ENCODE measurements at regions of chr11 and their contacts with region 1.

Region 1: DNA sequence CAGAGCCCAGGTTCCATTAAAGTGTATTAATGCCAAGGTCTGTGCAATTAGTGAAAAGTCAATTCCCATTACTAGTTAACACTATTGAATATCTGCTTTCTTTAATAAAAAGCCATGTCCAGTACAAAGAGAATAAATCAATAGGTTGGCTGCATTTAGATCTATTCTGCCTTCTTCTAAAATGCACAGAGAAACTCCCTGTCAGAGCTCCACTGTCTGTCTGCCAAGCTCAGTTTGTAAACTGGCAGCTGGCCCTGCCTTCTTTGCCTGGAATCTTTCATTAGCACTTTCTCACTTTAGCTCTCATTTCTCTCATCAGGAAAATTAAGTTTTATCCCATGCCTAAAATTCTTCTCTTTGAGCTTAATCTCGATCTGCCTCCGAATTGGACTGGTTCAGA is 35.6 kb downstream of the ARL14EP start:
- DNase-seq: no peak
- CTCF ChIP-seq: no peak

Region 2: GRCh38 chr11:30617771-30618170 is 259.2 kb after region 1 on chr11:
- in situ Hi-C with region 1: no loop called
- DNase-seq: no peak
- CTCF ChIP-seq: no peak

Region 3: DNA sequence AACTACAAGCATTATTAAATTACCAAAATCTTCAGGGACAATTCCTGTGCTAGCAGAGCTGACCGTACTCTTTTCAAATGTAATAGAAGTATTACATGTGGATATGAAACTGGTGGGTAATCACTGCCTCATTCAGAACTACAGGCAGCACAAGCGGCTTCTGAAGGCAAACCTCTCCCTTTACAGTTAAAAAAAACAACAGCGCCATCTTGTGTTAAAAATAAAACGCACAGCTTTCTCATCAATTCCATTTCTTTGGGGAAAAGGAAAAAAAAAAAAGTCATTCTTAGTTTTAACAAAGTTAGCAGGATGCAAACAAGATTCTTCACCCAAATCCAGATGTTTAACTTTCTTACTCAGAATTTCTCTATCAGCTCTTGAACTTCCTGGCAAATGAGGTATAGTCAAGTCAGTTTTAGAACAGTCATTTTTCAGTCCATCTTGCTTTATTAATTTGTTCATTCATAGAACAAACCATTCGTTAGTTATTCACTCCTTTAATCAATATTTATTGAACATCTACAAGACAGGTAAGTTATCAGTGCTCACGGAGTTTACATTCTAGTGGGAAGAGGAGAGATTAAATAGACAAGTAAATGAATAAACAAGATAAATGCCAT is 559.4 kb after region 1 on chr11:
- in situ Hi-C with region 1: loop called (anchors 10 kb)
- DNase-seq: peak; percentile 36
- CTCF ChIP-seq: peak; percentile 63